ENCODE measurements at regions of chr10 and their contacts with region 1.

Region 1: DNA sequence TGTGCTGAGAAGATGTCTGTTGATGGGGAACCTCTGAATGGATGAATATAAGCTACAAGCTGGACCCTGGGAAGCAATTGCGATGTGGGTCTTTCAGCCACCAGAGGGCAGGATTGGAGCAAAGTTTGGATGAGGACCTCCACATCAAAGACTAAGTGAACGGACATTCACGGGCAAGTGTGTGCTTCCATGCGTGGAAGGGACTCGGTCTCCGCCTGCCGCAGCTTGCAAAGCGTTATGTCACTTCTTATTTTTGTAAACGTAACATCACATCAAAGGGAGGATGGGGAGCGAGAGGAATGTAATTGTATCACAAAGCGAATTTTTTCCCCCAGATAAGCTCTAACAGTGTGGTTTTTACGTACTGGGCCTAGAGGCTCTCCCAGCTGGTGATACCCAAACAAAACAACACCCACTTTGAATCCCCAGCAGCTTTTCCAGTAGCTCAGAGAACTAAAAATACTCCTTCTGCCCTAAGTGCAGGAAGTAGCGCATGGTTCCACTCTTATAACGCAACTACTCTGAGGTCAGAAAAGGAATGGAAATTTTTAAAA is 65.0 kb downstream of the VWA2 start:
- DNase-seq: peak; percentile 67
- H3K4me3 ChIP-seq: peak overlapping the region; percentile 45
- CTCF ChIP-seq: peak; percentile 82

Region 2: DNA sequence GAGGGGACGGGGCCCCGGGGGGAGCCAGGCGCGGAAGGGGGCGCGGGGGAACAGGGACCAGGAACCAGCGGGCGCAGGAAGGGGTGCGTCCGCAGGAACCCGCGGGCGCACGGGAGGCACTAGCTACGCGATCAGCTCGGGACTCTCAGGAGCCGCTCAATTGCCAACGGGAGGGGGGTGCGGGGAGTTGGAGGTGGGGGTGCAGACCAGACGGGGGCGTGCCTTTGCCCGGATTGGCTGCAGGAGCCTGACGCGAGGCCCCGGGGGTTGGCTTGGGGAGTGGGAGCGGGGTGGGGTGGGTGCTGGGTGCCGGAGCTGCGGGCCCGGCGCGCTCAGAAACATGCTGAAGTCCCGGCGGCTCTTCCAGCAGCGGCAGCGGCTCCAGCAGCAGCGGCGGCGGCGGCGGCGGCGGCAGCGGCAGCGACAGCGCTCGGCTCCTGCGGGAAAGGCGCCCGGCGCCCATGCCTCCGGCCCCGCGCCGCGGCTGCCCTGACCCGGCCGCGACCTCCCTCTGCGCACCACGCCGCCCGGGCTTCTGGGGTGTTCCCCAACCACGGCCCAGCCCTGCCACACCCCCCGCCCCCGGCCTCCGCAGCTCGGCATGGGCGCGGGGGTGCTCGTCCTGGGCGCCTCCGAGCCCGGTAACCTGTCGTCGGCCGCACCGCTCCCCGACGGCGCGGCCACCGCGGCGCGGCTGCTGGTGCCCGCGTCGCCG is 260.4 kb before region 1 on chr10 and contains the start of gene ADRB1:
- CTCF ChIA-PET with region 1: no interaction called
- POLR2A ChIA-PET with region 1: no interaction called
- DNase-seq: no peak
- H3K4me3 ChIP-seq: peak within 1 kb of the TSS; percentile 49
- CTCF ChIP-seq: no peak

Region 3: DNA sequence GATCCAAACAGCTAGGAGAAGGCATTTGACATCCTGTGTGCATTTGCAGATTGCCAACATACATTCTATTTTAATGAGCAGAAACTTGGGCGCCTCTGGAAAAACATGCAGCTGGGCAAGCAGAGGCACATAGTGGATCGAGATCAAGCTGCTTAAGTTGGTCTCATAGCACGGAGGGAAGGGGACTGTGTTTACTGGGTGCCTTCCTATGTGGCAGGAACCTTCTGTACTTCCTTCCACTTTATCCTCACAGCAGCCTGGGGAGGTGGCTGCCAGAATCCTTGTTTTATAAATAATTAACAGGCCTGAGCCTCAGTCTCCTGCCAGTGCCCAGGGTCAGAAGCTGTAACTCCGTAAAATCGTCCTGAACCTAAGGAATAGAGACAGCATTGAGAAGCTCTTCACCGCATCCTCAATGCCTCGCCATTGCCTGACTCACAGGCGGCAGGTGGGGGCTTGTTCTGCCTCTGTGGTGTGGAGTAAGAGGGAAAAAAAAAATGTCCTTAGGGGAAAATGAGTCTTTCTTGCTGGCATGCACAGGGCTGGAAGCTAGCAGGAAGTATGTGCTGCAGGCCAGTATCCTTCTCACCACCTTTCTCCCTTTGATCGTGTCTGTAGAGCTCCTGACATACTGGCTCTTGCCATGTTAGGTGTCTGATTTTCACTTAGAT is 58.8 kb before region 1 on chr10:
- CTCF ChIA-PET with region 1: no interaction called
- POLR2A ChIA-PET with region 1: no interaction called
- DNase-seq: no peak
- H3K4me3 ChIP-seq: no peak overlapping the region
- CTCF ChIP-seq: no peak

Region 4: DNA sequence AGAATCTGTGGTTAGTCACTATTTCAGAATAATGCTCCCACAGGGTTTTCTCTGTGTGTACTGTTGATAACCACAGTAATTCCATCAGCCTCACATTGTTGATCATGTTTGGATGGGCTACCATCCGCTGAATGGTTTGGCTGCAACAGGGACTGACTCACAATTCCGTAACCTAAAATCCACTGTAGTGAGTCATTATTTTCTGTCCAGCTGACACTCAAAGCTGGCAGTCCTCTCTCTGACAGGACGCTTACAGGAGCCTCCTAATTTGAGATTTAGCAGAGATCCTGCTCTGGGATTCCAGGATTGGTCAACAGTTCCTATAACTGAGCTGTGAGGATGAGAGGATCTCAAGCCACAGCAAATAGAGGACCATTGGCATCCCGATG is 32.3 kb before region 1 on chr10:
- CTCF ChIA-PET with region 1: interaction called, 27 read pairs
- POLR2A ChIA-PET with region 1: interaction called, 4 read pairs
- DNase-seq: peak; percentile 79
- H3K4me3 ChIP-seq: no peak overlapping the region
- CTCF ChIP-seq: no peak

Region 5: DNA sequence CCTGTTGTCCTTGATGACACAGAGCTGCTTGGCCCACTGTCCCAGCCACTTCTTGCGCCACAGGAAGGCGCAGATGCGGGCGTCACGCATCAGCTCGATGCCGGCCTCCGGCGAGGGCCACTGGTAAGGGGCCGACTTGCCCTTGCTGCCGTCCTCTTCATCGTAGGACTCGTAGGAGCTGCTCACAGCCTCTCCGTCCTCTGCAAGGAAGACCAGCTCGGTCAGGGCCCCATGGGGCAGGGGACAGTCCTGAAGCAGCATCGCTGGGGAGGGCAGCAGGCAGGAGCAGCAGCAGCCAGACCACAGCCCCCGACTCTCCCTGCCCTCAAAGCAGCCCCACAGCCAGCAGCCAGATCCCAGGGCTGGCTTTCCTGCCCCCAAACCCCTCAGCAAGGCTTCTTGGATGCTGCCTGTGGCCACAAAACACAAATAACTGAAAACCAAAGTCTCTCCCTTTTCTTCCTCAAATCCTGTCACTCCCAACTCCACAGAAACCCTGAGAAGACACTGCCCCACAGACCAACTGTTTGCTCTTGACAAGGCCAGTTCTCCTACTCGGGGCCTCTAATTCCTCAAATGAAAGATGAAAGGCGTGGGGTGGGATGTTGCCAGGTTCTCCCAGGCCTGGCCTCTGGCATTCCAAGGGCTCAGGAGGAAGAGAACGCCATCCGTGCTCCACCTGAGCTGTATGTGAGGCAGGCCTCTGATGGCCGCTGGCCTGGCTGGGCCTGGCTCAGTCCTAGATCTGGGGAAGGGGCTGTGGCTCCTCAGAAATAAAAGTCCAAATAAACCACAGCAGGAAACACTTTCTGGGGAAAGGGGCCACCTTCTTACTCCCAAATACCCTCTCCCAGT is 11.7 kb after region 1 on chr10:
- CTCF ChIA-PET with region 1: interaction called, 11 read pairs
- POLR2A ChIA-PET with region 1: no interaction called
- DNase-seq: no peak
- H3K4me3 ChIP-seq: no peak overlapping the region
- CTCF ChIP-seq: no peak

Region 6: GRCh38 chr10:114437456-114438292 is 133.6 kb after region 1 on chr10:
- CTCF ChIA-PET with region 1: interaction called, 47 read pairs
- POLR2A ChIA-PET with region 1: no interaction called
- DNase-seq: no peak
- H3K4me3 ChIP-seq: no peak overlapping the region
- CTCF ChIP-seq: peak; percentile 40

Region 7: GRCh38 chr10:114550756-114551635 is 246.9 kb after region 1 on chr10:
- CTCF ChIA-PET with region 1: interaction called, 38 read pairs
- POLR2A ChIA-PET with region 1: no interaction called
- DNase-seq: no peak
- H3K4me3 ChIP-seq: no peak overlapping the region
- CTCF ChIP-seq: no peak

Region 8: GRCh38 chr10:114565066-114565465 is 261.0 kb after region 1 on chr10:
- CTCF ChIA-PET with region 1: no interaction called
- POLR2A ChIA-PET with region 1: no interaction called
- DNase-seq: no peak
- H3K4me3 ChIP-seq: no peak overlapping the region
- CTCF ChIP-seq: no peak

Region 9: GRCh38 chr10:115129752-115130151 is 825.7 kb after region 1 on chr10:
- CTCF ChIA-PET with region 1: interaction called, 21 read pairs
- POLR2A ChIA-PET with region 1: no interaction called
- DNase-seq: no peak
- H3K4me3 ChIP-seq: no peak overlapping the region
- CTCF ChIP-seq: no peak